Activated T-helper 2 cell treated with anti-CD3 and anti-CD28 coated beads, Interferon-gamma antibody, Interleukin-2, Interleukin-4, amounts not matched to agents 10 μg/mL and 5 μg/mL and 100 μg/mL, durations not matched to agents 14 hours and 24 hours and 36 hours (primary cell): ENCODE measurements at regions of chr2 and their contacts with region 1.

Region 1: DNA sequence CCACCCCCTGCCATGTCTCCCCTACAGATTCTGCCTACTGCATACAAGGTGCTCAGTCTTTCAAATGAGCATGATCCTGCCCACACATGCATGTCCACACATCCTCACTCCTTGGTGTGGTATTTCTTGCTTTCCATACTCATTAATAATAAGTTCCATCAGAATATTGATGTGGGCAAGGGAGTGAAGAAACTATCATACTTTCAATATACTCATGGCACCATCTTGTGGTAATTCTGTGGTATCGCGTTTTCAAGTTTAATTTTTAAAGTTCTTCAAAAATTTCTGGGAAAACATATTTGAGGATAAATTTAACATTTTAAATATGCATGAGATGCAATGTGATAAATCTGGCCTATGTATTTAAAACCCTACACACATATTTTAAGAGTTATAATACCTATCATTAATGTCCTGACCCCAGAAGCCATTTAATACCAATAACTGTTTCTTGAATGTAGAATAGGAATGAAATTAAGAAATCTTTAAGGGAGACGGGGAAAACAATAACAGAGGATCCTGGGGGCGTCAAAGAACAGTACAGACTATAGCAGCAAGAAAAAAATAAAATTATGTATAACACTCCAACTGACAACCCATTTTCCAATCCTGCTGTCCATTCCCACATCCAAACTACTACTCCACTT is 110.1 kb downstream of the ZNF385B start:
- DNase-seq: no peak
- H3K4me3 Mint-ChIP-seq: no peak overlapping the region
- H3K27ac Mint-ChIP-seq: no peak overlapping the region
- H3K4me1 Mint-ChIP-seq: no peaks in the 10 kb centered on the region
- H3K27me3 Mint-ChIP-seq: peaks cover 2% of the 10 kb centered on the region

Region 2: DNA sequence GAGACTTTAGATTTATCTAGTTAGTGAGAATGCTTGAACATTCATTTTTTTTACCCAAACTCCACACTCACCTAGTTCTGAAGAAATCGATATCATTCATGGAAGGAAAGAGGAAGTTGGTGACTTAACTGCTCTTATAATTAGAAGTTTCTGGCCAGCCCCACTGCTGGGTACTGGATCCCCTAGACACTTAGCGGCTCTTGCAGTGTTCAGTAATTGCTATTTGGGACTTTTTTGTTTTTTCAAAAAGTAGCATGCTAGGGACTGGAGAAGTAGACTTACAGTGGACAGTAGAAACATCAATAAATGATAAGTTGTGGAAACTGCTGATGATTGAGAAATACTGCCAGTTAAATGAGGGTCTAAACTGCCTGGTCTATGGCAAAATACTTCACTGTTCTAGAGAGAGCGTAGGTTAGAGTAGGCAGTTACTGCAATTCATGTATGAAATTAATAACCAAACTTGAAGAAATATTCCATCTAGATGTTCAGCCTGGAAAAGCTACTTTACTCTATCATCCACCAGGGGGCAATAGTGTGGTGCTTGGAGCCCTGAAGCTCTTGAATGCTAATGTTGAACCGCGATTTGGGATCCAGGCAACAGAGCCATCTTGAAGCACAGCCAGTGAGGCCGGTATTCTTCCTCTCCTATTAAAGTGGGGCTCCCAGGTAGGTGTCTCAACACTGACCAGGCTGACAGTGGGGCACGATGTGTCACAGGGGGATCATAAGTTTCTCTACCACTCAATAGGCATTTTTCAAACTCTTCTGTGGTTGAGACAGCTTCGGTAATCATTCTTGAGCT is 340.5 kb before region 1 on chr2:
- intact Hi-C with region 1: loop called (anchors 2 kb)
- DNase-seq: no peak
- H3K4me3 Mint-ChIP-seq: no peak overlapping the region
- H3K27ac Mint-ChIP-seq: no peak overlapping the region
- H3K4me1 Mint-ChIP-seq: peaks cover 9% of the 10 kb centered on the region
- H3K27me3 Mint-ChIP-seq: peaks cover 19% of the 10 kb centered on the region

Region 3: GRCh38 chr2:179677077-179677688 is 74.1 kb before region 1 on chr2:
- intact Hi-C with region 1: no loop called
- DNase-seq: no peak
- H3K4me3 Mint-ChIP-seq: no peak overlapping the region
- H3K27ac Mint-ChIP-seq: no peak overlapping the region
- H3K4me1 Mint-ChIP-seq: no peaks in the 10 kb centered on the region
- H3K27me3 Mint-ChIP-seq: no peaks in the 10 kb centered on the region